ENCODE measurements at regions of chr13 and their contacts with region 1.

Region 1: GRCh38 chr13:41004875-41005693 is 14.0 kb downstream of the ELF1 start:
- DNase-seq: no peak
- H3K4me3 Mint-ChIP-seq: peak overlapping the region; percentile 64
- H3K27ac Mint-ChIP-seq: peak overlapping the region; percentile 79
- H3K4me1 Mint-ChIP-seq: peaks cover 65% of the 10 kb centered on the region
- H3K27me3 Mint-ChIP-seq: no peaks in the 10 kb centered on the region

Region 2: DNA sequence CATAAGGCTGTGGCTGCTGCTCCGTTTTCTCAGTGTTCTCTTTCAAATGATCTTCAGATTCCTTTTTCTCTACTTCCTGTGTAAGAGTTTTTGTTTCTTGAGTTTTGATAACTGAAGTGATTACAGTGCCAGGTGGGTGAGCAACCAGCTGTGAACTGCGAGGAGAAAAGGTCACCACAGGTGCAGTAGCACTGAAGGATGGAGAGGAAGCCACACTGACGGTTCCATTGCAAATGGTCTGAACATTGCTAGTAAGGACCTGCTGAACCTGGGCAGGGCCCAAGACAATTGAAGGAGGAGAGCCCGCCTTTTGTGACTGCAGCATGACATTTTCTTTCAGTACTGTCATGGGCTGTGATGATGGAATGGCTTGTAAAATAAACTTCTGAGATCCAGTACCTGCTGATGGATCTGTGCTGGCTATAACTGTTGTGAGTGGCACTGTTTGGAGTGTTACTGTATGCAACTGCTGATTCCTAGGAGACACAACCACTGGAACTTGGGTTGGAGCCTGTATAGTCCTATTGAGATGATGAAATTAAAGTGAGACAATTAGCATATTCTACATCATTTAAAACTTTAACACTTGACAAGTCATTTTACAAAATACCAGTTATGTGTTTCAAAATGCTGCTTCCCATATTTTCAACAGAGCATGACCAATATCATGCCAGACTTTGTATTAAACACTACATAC is 71.4 kb before region 1 on chr13:
- CTCF ChIA-PET with region 1: no interaction called
- POLR2A ChIA-PET with region 1: no interaction called
- intact Hi-C with region 1: no loop called
- DNase-seq: peak; percentile 16
- H3K4me3 Mint-ChIP-seq: no peak overlapping the region
- H3K27ac Mint-ChIP-seq: peak overlapping the region; percentile 82
- H3K4me1 Mint-ChIP-seq: peaks cover 25% of the 10 kb centered on the region
- H3K27me3 Mint-ChIP-seq: no peaks in the 10 kb centered on the region

Region 3: DNA sequence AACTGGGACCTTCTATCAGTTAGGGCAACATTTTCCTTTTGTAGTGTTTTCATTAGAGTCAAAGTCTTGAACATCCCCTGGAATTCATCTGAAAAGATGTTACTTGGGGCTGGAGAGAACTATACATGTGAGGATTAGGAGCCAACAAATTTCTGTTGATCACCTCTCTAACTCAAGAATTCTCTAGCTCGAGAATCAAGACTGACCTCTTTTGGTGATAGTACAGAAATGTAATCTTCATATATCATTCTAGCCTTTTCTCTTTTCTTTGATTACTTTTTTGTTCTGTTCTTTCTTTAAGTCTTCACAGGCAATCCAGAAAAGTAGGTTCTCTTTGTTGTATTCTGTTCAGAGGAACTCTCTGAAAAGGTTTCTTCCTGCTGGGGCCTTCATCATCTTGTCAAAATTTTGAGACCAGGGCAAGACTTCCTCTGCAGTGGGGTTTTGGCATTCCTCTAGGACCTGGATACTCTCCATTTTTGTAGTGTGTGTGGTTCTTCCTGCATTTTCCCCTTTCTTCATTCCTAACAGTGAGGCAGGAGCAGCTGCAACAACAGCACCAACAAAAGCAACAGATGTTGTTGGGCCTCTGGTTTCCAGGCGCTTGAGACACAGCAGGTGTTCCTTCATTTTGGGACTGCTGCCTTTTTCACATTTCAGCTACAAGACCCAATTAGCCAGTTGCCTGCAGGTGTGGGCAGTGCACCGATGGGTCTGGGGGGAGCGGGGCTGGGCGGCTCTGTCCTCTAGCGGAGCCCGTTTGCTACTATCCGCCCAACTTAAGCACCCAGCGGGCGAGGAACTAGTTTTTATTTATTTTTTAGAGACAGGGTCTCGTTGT is 12.2 kb before region 1 on chr13:
- CTCF ChIA-PET with region 1: no interaction called
- POLR2A ChIA-PET with region 1: interaction called, 4 read pairs
- intact Hi-C with region 1: loop called (anchors 1 kb)
- DNase-seq: no peak
- H3K4me3 Mint-ChIP-seq: no peak overlapping the region
- H3K27ac Mint-ChIP-seq: peak overlapping the region; percentile 75
- H3K4me1 Mint-ChIP-seq: peaks cover 72% of the 10 kb centered on the region
- H3K27me3 Mint-ChIP-seq: no peaks in the 10 kb centered on the region

Region 4: GRCh38 chr13:41019011-41019487 is 14.0 kb after region 1 on chr13 and contains the start of gene ELF1:
- CTCF ChIA-PET with region 1: no interaction called
- POLR2A ChIA-PET with region 1: interaction called, 8 read pairs
- intact Hi-C with region 1: loop called (anchors 1 kb)
- DNase-seq: peak; percentile 67
- H3K4me3 Mint-ChIP-seq: peak within 1 kb of the TSS; percentile 92
- H3K27ac Mint-ChIP-seq: peak within 1 kb of the TSS; percentile 98
- H3K4me1 Mint-ChIP-seq: peaks cover 36% of the 10 kb centered on the region
- H3K27me3 Mint-ChIP-seq: no peaks in the 10 kb centered on the region
- total RNA-seq, gene ELF1: 70.8 to 71.2 TPM

Measured in activated CD4-positive, alpha-beta memory T cell treated with anti-CD3 and anti-CD28 coated beads for 36 hours (primary cell).